Cardiac septum (tissue), 1 donor: ENCODE measurements at regions of chr10 and their contacts with region 1.

Region 1: DNA sequence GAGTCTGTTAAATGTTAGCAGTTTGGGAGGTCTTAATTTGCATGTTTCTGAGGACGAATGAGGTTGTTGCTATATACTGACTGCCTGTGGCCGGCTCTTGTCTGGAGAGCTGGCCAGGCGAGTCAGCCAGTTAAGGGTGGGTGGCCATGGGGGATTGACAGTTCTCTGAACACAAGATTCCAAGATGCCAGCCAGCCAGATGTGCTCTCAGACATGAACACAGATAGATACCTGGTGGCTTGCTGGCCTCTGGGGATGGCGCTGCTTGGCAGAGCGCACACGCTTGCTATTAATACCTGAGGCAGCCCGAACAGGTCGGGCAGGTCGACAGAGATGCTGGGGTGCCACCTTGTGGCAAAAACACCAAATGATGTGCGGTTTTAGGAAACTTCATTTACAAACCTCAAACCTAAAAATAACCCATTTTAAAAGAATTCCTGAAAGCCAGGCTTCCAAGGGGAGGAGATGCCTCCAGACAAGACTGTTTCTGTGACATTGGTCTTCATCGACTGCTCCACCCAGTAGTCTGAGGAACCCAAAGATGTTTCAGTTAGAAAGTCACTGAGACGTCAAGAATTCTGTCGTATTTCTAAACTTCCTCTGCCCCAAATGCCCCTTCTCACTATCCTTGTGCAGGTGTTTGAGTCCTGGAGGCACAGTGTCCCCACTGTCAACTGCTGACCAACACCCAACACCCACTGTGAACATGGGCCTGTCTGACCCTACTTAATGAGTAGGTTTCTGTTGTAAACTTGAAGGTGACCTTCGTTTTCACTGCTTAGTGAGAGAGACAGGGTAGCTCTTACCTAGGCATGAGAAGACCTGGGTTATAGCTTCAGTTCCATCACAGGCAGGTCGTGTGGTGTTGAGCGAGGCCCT is 123.4 kb downstream of the NT5C2 start:
- DNase-seq: no peak

Region 2: GRCh38 chr10:102729029-102730026 is 340.4 kb before region 1 on chr10:
- intact Hi-C with region 1: loop called (anchors 5 kb)
- DNase-seq: peak; percentile 95

Region 3: DNA sequence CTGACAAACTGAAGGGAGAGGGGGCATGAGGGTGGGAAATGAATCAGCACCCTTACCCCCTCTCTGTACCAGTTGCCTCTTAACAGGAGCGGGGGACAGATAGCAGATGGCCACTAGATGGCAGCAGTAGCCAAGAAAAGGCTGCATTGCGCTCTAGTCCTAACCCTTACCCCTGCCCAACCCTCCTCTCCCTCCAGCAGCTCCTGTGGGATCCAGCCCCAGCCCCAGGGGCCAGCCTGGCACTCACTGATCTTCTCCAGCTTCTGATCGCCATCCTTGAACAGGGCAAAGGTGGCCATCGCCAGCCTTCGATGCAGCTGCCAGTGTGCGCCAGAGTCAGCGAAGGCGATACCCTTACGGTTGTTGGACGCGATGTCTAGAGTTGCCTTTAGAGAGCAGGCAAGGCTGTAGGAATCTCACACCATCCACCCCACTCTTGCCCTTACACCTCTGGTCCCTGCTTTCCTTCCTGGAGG is 234.6 kb before region 1 on chr10:
- intact Hi-C with region 1: loop called (anchors 10 kb)
- DNase-seq: peak; percentile 86

Region 4: DNA sequence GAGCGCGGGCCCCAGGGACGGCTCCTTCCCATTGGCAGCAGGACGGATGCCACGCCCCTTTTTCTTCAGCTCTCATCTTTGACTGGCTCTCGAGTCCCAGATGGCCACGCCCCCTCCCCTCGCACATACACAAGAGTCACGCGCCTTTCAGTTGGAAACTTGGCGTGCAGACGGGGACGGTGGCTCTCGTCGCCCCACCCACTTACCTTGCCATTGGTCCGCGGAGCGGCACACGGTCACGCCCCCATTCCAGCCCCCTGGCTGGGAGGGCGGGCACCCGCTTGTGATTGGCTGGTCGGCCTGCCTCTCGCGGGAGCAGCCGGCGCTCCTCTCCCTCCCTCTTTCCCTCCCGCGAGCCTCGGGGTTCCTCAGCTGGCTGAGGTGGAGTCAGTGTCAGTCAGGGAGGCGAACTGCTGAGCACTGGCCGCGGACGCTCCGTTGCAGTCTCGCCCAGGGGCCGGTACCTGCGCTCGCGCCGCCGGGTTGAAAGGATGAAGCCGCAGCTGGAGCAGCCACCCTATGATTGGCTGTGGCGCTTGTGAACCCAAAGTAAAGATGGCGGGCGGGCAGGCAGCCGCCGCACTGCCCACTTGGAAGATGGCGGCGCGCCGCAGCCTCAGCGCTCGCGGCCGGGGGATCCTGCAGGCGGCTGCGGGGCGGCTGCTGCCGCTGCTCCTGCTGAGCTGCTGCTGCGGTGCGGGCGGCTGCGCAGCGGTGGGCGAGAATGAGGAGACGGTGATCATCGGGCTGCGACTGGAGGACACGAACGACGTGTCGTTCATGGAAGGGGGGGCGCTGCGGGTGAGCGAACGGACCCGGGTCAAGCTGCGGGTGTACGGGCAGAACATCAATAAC is 151.5 kb before region 1 on chr10 and contains the start of gene CNNM2:
- intact Hi-C with region 1: loop called (anchors 1 kb)
- DNase-seq: peak; percentile 100
- total RNA-seq, gene CNNM2: 5.9 TPM